ENCODE measurements at regions of chr17 and their contacts with region 1.

Region 1: DNA sequence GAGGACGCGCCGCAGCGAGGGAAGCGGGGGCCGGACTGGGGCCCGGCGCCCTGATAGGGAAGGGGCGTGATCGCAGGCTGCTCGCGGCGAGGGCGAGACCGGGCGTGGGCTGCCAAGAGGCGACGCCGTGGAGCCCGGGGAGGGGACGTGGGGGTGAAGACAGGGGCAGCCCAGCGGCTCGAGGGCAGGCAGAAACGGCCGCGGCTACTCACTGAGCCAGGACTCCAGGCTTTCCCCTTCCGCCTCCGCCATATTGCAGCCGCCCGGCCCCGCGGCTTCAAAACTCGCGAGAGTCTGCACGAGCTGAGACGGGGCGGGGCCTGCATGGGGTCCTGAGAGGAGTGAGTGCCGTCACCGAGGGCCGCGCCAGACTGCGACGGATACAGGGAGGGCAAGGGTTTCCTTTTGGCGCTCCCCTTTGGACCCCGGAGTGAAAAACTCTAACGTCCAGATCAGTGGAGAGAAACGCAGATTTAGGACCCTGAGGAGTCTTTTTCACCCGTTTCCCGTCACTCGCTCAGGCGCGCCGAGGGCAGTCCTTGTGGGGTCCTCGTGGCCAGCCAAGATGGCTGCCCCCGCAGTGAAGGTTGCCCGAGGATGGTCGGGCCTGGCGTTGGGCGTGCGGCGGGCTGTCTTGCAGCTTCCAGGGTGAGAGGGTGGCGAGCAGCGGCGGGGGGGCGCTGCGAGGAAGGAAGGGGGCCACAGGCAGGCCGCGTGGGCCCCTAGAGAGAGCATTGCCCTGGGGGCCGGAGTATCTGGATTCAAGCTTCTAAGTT is at the starts of genes GGA3 and MRPS7:
- DNase-seq: peak; percentile 92
- ATAC-seq: peak; percentile 95
- H3K4me3 ChIP-seq: peak within 1 kb of the TSS; percentile 72 to 89 (median 77)
- H3K27ac ChIP-seq: peak within 1 kb of the TSS; percentile 97
- H3K4me1 ChIP-seq: peaks cover 44% of the 10 kb centered on the region
- H3K27me3 ChIP-seq: no peaks in the 10 kb centered on the region; a peak in 1 of 5 replicates
- CTCF ChIP-seq: 0 out of 2 replicates have a peak, but pooled peaks have one; percentile 2
- EP300 ChIP-seq: 0 out of 4 replicates have a peak, but pooled peaks of 1 of the 2 experiments have one; percentile 54
- POLR2A ChIP-seq: peak; percentile 79 to 97
- RAD21 ChIP-seq: no peak; the same call in 1 of the 2 replicates
- total RNA-seq, gene GGA3: 20.9 and 28.4 TPM in 2 replicates
- total RNA-seq, gene MRPS7: 162 and 184 TPM in 2 replicates

Region 2: GRCh38 chr17:75102385-75102821 is 159.1 kb before region 1 on chr17:
- CTCF ChIA-PET with region 1: no interaction called
- POLR2A ChIA-PET with region 1: no interaction called
- in situ Hi-C with region 1: no loop called
- intact Hi-C with region 1: no loop called
- DNase-seq: no peak
- ATAC-seq: no peak
- H3K4me3 ChIP-seq: no peak overlapping the region
- H3K27ac ChIP-seq: no peak overlapping the region
- H3K4me1 ChIP-seq: peaks cover 9% of the 10 kb centered on the region
- H3K27me3 ChIP-seq: peaks cover 0 to 3% of the 10 kb centered on the region in 2 experiments; a peak in 3 of 5 replicates
- CTCF ChIP-seq: no peak
- EP300 ChIP-seq: no peak
- POLR2A ChIP-seq: no peak
- RAD21 ChIP-seq: no peak

Region 3: DNA sequence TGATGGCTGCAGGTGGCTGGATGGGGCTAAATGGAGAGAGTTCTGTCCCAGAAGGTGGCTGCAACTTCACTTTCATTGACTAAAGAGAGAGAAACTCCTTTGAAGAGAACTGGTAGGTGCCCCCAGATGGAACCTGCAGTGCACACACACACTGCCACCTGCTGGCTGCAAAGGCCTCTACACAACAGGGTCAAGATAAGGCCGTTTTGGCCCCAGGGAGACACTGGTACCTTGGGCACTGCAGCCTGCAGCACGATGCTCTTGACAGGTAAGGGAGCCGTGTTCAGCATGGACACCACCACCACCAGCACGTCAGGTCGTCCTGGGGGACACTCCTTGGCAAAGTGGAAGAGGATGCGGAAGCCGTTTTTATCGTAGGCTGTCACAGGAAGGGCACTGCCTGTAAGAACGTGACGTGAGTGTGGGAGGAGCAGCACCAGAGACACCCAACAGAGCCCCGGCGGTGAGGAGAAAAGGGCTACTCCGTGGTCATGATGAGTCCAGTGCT is 22.8 kb before region 1 on chr17:
- CTCF ChIA-PET with region 1: no interaction called
- POLR2A ChIA-PET with region 1: interaction called, 10 read pairs
- in situ Hi-C with region 1: no loop called
- intact Hi-C with region 1: no loop called
- DNase-seq: peak; percentile 74
- ATAC-seq: peak; percentile 83
- H3K4me3 ChIP-seq: no peak overlapping the region
- H3K27ac ChIP-seq: no peak overlapping the region
- H3K4me1 ChIP-seq: no peaks in the 10 kb centered on the region
- H3K27me3 ChIP-seq: no peaks in the 10 kb centered on the region
- CTCF ChIP-seq: peak; percentile 97
- EP300 ChIP-seq: no peak
- POLR2A ChIP-seq: no peak; a peak in 2 of 4 replicates
- RAD21 ChIP-seq: peak; percentile 54

Region 4: DNA sequence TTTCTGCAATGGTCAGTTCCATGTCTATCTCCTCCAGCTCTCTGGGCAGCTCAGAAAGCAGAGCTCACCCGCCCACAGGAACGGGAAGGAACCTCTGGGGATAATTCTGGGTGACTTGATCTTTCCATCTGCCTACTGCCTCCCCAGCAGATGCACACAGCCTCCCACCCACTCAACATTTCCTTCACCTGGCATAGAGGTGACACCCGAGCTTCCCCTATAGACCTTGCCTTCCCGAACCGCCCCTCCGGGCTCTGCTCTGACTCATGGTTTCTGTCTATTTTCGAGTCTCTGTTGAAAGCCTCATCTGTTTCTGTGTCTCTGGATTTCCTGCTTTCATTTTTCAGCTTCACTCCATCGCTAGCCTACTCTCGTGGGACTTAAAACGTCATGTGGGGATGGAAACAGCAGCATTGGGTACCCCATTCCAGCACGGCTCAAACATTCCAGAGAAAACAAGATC is 11.5 kb before region 1 on chr17:
- CTCF ChIA-PET with region 1: no interaction called
- POLR2A ChIA-PET with region 1: interaction called, 12 read pairs
- in situ Hi-C with region 1: no loop called
- intact Hi-C with region 1: no loop called
- DNase-seq: no peak
- ATAC-seq: no peak
- H3K4me3 ChIP-seq: no peak overlapping the region
- H3K27ac ChIP-seq: no peak overlapping the region
- H3K4me1 ChIP-seq: peaks cover 25% of the 10 kb centered on the region
- H3K27me3 ChIP-seq: no peaks in the 10 kb centered on the region
- CTCF ChIP-seq: no peak
- EP300 ChIP-seq: no peak
- POLR2A ChIP-seq: no peak
- RAD21 ChIP-seq: no peak

Region 5: GRCh38 chr17:75289115-75289831 is 27.7 kb after region 1 on chr17 and contains the start of gene SLC25A19:
- CTCF ChIA-PET with region 1: no interaction called
- POLR2A ChIA-PET with region 1: interaction called, 43 read pairs
- in situ Hi-C with region 1: no loop called
- intact Hi-C with region 1: no loop called
- DNase-seq: peak; percentile 99
- ATAC-seq: peak; percentile 97
- H3K4me3 ChIP-seq: peak within 1 kb of the TSS; percentile 74 to 94 (median 87)
- H3K27ac ChIP-seq: peak within 1 kb of the TSS; percentile 75
- H3K4me1 ChIP-seq: peaks cover 57% of the 10 kb centered on the region
- H3K27me3 ChIP-seq: no peaks in the 10 kb centered on the region
- CTCF ChIP-seq: peak; percentile 93
- EP300 ChIP-seq: no peak
- POLR2A ChIP-seq: peak; percentile 94 to 99
- RAD21 ChIP-seq: peak; percentile 77
- total RNA-seq, gene SLC25A19: 41.4 and 42.2 TPM in 2 replicates

Region 6: DNA sequence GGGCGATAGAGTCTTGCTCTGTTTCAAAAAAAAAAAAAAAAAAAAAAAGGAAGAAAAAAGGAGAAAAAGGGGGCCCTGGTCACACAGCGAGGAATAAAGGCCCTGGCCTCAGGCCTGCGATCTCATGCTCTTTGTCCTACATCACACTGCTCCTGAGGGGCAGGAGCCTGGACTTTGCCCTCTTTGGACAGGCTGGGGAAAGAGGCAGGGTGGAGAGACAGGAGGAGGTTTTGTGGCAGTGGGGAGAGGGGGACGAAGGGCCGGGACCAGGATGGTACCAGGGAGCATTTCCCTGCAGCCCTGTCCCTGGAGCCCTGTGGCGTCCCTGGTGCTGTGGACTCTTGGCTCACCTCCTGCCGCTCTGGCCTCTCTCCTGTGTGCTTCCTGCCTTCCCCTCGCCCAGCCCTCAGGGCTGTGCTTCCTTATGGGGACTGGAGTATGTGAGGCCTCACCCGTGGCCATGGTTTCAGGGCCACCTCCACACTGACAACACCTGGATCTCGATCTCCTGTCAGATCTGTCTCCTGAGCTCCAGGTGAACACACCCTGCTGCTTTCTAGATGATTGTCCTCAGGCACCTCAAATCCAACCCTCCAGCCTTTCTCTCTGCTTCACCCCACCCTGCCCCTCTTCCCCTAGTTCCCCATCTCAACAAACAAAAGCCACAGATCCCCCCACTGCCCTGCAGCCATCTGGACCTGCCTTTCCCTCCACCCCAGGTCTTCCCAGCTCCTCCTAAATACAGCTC is 47.7 kb after region 1 on chr17:
- CTCF ChIA-PET with region 1: no interaction called
- POLR2A ChIA-PET with region 1: interaction called, 12 read pairs
- in situ Hi-C with region 1: no loop called
- intact Hi-C with region 1: no loop called
- DNase-seq: peak; percentile 94
- ATAC-seq: peak; percentile 87
- H3K4me3 ChIP-seq: peak overlapping the region; percentile 35 to 69 (median 48); a peak in 5 of 6 replicates
- H3K27ac ChIP-seq: peak overlapping the region; percentile 89
- H3K4me1 ChIP-seq: peaks cover 66% of the 10 kb centered on the region
- H3K27me3 ChIP-seq: no peaks in the 10 kb centered on the region
- CTCF ChIP-seq: no peak; the same call in 1 of the 2 replicates
- EP300 ChIP-seq: peak; percentile 53 to 67; a peak in 2 of 4 replicates
- POLR2A ChIP-seq: peak; percentile 93
- RAD21 ChIP-seq: peak; percentile 70

Region 7: GRCh38 chr17:75346906-75347305 is 85.4 kb after region 1 on chr17:
- CTCF ChIA-PET with region 1: no interaction called
- POLR2A ChIA-PET with region 1: no interaction called
- in situ Hi-C with region 1: no loop called
- intact Hi-C with region 1: no loop called
- DNase-seq: no peak
- ATAC-seq: peak; percentile 27
- H3K4me3 ChIP-seq: no peak overlapping the region
- H3K27ac ChIP-seq: peak overlapping the region; percentile 20
- H3K4me1 ChIP-seq: peaks cover 80% of the 10 kb centered on the region
- H3K27me3 ChIP-seq: no peaks in the 10 kb centered on the region
- CTCF ChIP-seq: no peak
- EP300 ChIP-seq: no peak
- POLR2A ChIP-seq: no peak
- RAD21 ChIP-seq: no peak

Region 8: DNA sequence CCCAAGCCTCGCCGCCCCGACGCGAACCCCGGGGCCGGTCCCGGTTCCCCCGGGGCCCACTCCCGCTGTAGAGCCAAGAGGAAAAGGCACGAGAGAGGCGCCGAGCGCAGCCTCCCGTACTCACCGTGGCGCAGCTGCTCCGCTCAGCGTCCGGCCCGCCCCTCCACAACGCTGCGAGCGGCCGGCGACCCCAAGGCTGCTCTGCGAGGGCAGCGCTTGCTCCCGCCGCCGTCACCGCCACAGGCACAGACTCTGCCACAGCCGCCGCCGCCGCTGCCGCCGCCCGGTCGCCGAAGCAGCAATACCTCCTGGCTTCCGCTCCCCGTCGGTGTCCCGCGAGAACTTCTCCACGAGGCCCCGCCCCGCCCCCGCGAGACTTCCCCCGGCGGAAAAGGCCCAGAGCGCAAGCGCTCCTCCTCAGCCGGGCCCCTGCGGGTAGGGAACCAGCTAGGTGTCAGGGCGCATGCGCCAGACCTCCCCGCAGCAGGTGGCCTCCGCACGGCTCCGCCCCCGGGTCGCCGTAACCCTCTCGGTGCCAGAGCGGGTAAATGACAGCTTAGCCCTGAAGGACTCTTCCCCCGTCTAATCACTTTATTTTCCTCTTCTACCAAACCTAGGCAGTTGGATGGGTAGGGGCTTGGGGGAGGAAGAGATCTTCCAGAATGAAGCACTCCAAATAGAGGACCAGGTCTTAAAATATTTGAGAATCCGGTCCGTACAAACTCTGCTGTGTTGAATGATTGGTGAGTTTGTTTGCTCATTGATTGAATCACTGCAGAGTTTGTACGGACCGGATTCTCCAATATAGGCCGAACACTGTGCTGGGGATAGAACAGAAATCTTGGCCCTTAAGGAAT is 144.1 kb after region 1 on chr17 and contains the start of gene GRB2:
- CTCF ChIA-PET with region 1: no interaction called
- POLR2A ChIA-PET with region 1: interaction called, 20 read pairs
- in situ Hi-C with region 1: loop called (anchors 5 kb)
- intact Hi-C with region 1: no loop called
- DNase-seq: peak; percentile 96
- ATAC-seq: peak; percentile 84
- H3K4me3 ChIP-seq: peak within 1 kb of the TSS; percentile 73 to 99 (median 96)
- H3K27ac ChIP-seq: peak within 1 kb of the TSS; percentile 87
- H3K4me1 ChIP-seq: peaks cover 57% of the 10 kb centered on the region
- H3K27me3 ChIP-seq: no peaks in the 10 kb centered on the region; a peak in 1 of 5 replicates
- CTCF ChIP-seq: peak; percentile 22; the same call in 1 of the 2 replicates
- EP300 ChIP-seq: 0 out of 4 replicates have a peak, but pooled peaks of 1 of the 2 experiments have one; percentile 2
- POLR2A ChIP-seq: peak; percentile 71 to 94
- RAD21 ChIP-seq: peak; percentile 44; the same call in 1 of the 2 replicates
- total RNA-seq, gene GRB2: 92.3 and 95.7 TPM in 2 replicates

Region 9: DNA sequence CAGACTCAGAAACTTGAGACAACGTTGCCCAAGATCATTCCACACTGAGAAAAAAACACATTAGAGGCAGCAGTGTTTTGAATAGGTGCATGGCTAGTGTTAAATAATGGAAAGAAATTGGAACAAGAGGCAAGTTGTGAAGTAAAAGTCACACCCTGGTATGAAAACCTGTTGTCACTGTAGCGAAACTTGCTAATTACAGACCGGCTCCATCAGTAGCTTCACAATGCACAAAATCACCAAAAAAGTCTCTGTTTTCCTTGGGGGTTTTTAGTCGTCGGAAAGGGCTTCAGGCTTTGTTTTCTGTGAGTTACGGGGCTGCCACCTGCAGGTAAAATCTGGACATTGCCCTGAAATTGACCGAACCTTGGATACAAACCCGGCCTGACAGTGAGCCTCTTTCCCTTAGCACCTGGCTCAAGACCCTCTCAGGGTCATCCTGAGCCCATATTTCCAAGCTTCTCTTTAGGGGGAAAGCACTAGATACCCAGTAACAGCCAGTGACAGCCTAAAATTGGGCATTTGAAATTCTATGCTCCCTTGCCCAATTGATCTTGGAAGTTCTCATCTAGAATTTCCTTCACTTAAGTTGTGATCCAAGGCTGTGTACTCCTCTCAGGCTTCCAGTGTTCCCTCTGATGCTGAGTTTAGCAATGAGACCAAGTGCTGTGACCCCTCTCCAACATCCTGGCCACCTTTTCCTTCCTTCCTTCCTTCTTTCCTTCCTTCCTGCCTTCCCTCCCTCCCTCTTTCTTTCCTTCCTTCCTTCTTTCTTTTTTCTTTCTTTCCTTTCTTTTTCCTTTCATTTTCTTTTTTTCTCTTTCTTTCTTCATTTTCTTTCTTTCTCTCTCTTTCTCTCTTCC is 151.2 kb after region 1 on chr17:
- CTCF ChIA-PET with region 1: interaction called, 7 read pairs
- POLR2A ChIA-PET with region 1: no interaction called
- in situ Hi-C with region 1: loop called (anchors 5 kb)
- intact Hi-C with region 1: loop called (anchors 1 kb)
- DNase-seq: peak; percentile 79
- ATAC-seq: peak; percentile 78
- H3K4me3 ChIP-seq: peak overlapping the region in 1 of 3 experiments; percentile 35; a peak in 1 of 6 replicates
- H3K27ac ChIP-seq: no peak overlapping the region
- H3K4me1 ChIP-seq: peaks cover 33% of the 10 kb centered on the region
- H3K27me3 ChIP-seq: peaks cover 0 to 5% of the 10 kb centered on the region in 2 experiments; a peak in 1 of 5 replicates
- CTCF ChIP-seq: peak; percentile 98
- EP300 ChIP-seq: no peak
- POLR2A ChIP-seq: no peak
- RAD21 ChIP-seq: peak; percentile 96

Measured in HepG2 (cell line).